ENCODE measurements at regions of chr12 and their contacts with region 1.

Region 1: DNA sequence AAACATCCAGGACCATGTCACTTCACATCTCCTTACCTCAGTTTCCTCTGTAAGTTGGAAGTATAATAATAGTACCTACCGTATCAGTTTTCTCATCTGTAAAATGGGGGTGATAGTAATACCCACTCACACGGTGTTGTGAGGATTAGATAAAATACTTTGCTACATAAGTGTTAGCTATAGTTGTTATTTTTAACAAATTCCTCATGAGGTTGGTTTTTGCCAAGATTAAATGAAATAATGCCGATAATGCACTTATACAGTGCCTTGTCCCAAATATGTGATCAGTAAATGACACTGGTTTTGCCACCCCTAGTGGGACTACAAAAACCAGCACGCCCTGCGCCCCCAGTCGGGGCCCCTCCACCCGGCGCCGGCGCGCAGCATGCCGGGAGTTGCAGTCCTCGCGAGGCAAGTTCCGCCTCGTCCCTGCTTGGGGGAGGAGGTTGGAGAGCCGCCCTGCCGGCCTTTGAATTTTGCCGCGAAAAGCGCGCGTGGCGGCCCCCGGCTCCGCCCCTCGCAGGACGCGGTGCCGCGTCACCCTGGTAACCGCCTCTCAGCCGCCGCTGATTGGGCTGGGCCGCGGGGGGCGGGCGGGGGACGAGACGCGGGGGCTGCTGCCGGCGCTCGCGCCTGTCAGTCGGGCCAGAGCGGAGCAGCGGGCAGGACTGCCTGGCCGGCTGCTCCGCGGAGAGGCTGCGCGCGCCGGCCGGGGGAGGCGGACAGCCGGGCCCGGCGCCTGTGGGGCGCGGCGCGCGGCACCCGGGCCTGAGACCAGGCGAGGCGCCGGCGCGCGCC is at the start of gene FAM222A:
- DNase-seq: peak; percentile 98 to 99 (median 98)
- ATAC-seq: peak; percentile 93 to 97 (median 95)
- H3K4me3 ChIP-seq: peak within 1 kb of the TSS; percentile 28 to 84 (median 68)
- H3K27ac ChIP-seq: peak within 1 kb of the TSS in 11 of 12 donors; percentile 37 to 83 (median 71)
- H3K4me1 ChIP-seq: peaks cover 0 to 62% (median 15%) of the 10 kb centered on the region in 12 donors
- H3K27me3 ChIP-seq: peaks cover 0 to 38% (median 10%) of the 10 kb centered on the region in 9 donors
- CTCF ChIP-seq: peak in 6 of 12 donors; percentile 9 to 39 (median 20)
- POLR2A ChIP-seq: peak in 1 of 2 donors; percentile 81
- total RNA-seq, gene FAM222A: 3.5 to 45.8 (median 11.2) TPM

Region 2: DNA sequence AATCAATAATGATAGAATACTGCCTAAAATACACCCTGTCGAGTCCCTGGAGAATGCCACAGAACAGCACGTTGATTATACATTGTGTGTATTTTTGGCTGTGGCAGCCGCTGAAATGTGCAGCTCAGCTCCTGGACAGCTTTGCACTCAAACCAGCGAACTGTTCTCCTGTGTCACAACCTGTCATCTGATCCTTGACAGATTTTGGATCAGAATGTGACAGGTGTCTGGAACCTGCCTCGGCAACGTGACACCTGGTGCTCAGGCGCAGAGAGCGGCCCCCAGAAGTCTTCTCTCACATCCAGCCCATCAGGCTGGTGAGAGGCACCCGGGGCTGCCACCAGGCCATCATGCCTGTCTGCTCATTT is 120.5 kb before region 1 on chr12:
- intact Hi-C with region 1: loop called in 7 of 10 experiments (anchors 2 to 5 kb)
- DNase-seq: peak in 1 of 5 donors; percentile 52
- ATAC-seq: peak in 3 of 4 donors; percentile 47 to 62 (median 48)
- H3K4me3 ChIP-seq: no peak overlapping the region
- H3K27ac ChIP-seq: peak overlapping the region in 8 of 12 donors; percentile 29 to 75 (median 60)
- H3K4me1 ChIP-seq: peaks cover 0 to 19% (median 4%) of the 10 kb centered on the region in 12 donors
- H3K27me3 ChIP-seq: no peaks in the 10 kb centered on the region
- CTCF ChIP-seq: no peak
- POLR2A ChIP-seq: no peak

Region 3: DNA sequence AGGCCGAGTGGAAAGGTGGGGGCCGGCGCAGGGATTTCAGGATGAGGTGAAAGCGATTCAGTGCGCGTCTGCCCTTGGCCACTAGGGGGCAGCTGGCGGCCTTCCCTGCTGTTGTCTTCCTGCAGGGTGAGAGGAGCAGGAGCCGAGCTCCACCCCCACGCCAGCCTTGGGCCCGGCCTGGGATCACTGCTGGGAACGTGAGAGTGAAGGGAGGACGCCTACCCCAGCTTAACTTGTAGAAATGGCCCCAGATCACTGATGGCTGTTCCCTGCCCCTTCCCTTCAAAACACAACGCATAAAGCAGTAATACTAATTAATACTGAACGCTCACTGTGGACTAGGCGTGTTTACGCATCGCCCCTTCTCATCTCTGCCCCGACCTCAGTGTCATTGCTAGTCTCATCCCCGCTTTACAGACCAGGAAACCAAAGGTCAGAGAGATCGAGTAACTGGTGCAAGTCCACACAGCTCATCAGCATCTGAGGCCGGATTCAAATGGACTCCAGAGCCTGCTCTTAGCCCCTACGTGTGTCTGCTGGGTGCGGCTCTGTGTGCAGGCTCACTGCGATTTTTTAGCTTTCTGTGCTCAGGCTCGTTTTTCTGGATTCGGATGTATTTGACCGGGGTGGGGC is 115.5 kb before region 1 on chr12:
- intact Hi-C with region 1: loop called in 7 of 10 experiments (anchors 2 to 5 kb)
- DNase-seq: peak; percentile 86 to 93 (median 90)
- ATAC-seq: peak; percentile 84 to 90 (median 88)
- H3K4me3 ChIP-seq: no peak overlapping the region
- H3K27ac ChIP-seq: no peak overlapping the region
- H3K4me1 ChIP-seq: peaks cover 0 to 18% (median 6%) of the 10 kb centered on the region in 12 donors
- H3K27me3 ChIP-seq: peaks cover 0 to 2% (median 0%) of the 10 kb centered on the region in 9 donors
- CTCF ChIP-seq: peak; percentile 92 to 98 (median 96)
- POLR2A ChIP-seq: no peak

Region 4: GRCh38 chr12:109606320-109607028 is 106.9 kb before region 1 on chr12:
- intact Hi-C with region 1: loop called in 1 of 10 experiments (anchors 5 kb)
- DNase-seq: peak in 4 of 5 donors; percentile 38 to 73 (median 57)
- ATAC-seq: peak; percentile 69 to 90 (median 81)
- H3K4me3 ChIP-seq: peak overlapping the region in 8 of 12 donors; percentile 10 to 39 (median 30)
- H3K27ac ChIP-seq: peak overlapping the region in 8 of 12 donors; percentile 20 to 80 (median 62)
- H3K4me1 ChIP-seq: peaks cover 0 to 15% (median 4%) of the 10 kb centered on the region in 12 donors
- H3K27me3 ChIP-seq: peaks cover 0 to 15% (median 0%) of the 10 kb centered on the region in 9 donors
- CTCF ChIP-seq: no peak
- POLR2A ChIP-seq: no peak

Region 5: GRCh38 chr12:109775172-109775881 is 61.9 kb after region 1 on chr12:
- intact Hi-C with region 1: loop called in 7 of 10 experiments (anchors 2 to 5 kb)
- DNase-seq: peak; percentile 67 to 84 (median 68)
- ATAC-seq: peak; percentile 75 to 86 (median 80)
- H3K4me3 ChIP-seq: no peak overlapping the region
- H3K27ac ChIP-seq: no peak overlapping the region
- H3K4me1 ChIP-seq: peaks cover 0 to 16% (median 0%) of the 10 kb centered on the region in 12 donors
- H3K27me3 ChIP-seq: peaks cover 0 to 2% (median 0%) of the 10 kb centered on the region in 9 donors
- CTCF ChIP-seq: peak; percentile 78 to 96 (median 86)
- POLR2A ChIP-seq: no peak

Measured in heart left ventricle (tissue), 16 donors.